Common myeloid progenitor, CD34-positive (primary cell): ENCODE measurements at regions of chr13 and their contacts with region 1.

Region 1: DNA sequence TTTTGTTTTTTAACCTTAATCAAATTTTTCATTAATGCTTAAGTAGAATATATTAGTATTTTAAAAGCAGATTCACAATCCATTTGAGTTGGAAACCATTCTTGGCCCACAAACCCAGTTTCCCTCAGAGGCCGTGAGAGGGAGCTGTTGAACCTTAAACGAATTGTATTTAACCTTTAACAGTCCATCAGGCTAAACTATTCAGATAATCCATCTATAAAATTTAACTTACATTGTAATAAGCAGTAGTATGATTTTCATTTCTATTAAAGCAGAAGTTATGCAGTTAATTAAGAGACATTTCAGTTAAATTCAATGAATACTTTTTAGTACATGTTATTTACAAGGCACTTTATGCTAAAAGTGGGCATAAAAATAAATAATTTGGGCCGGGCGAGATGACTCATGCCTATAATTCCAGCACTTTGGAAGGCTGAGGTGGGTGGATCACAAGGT is 123.1 kb upstream of the C1QTNF9B start:
- DNase-seq: peak; percentile 56 to 78 (median 71)
- H3K4me3 ChIP-seq: no peak overlapping the region
- H3K27ac ChIP-seq: no peak overlapping the region
- H3K4me1 ChIP-seq: peaks cover 0 to 2% (median 0%) of the 10 kb centered on the region in 4 experiments
- H3K27me3 ChIP-seq: no peaks in the 10 kb centered on the region

Region 2: DNA sequence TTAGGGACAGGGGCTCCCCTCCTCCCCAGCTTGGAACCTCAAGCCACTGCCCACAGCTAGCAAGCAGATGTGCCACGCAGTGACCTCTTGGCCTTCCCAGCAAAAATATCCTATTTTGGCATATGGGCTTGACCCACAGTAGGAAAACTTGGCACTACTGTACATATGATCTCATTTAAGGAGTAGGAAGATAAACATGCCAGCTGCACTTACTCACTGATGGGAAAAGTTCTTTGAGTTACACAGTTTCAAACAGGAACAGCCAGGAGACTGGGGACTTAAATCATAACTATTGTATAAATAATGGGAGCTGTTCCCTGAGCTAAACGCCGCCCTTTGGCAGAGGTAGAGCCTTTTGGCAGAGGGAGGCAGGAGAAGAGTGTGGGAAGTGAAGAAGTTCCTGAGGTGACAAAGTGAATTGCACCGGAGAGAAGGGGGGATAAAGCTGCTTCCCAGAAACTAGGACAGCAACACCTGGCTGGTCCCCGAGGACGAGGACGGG is 593.0 kb before region 1 on chr13:
- CTCF ChIA-PET with region 1: no interaction called
- POLR2A ChIA-PET with region 1: no interaction called
- DNase-seq: no peak
- H3K4me3 ChIP-seq: no peak overlapping the region
- H3K27ac ChIP-seq: no peak overlapping the region
- H3K4me1 ChIP-seq: no peaks in the 10 kb centered on the region
- H3K27me3 ChIP-seq: peaks cover 3 to 17% (median 8%) of the 10 kb centered on the region in 5 experiments

Region 3: DNA sequence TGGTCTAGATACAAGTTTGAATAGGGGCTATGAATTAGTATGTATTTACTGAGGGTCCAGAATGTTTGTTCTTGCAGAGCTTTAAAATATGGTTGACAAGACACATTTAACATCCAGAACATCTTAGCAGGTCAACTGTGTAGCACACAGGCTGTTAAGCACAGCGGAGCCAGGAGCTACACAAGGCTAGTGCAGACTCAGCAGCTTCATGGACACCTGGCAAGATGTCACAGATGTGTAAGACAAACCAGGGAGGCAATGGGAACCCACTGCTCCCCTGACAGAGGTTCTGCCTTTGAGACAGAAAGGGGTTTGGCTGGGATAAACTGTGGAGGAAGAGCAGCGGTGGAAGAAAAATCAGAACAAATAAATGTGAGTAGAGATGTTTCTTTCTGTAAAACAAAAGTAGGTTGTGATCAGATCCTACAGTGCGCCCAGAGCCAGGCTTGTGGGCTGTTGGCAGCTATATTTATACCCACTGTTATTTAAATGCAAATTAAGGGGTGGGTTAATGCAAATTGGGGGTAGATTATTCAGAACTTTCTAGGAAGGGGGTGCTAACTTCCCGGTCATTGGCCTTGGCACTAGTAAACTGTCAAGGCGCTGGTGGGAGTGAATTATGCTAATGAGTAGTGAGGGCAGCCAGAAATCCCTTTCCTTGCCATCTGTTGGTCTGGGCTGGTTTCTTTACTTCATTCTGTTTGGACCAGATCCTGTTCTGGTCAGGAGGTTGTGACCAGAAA is 164.2 kb before region 1 on chr13:
- CTCF ChIA-PET with region 1: no interaction called
- POLR2A ChIA-PET with region 1: no interaction called
- DNase-seq: no peak
- H3K4me3 ChIP-seq: no peak overlapping the region
- H3K27ac ChIP-seq: no peak overlapping the region
- H3K4me1 ChIP-seq: no peaks in the 10 kb centered on the region
- H3K27me3 ChIP-seq: no peaks in the 10 kb centered on the region

Region 4: GRCh38 chr13:23992781-23993679 is 27.4 kb before region 1 on chr13:
- CTCF ChIA-PET with region 1: no interaction called
- POLR2A ChIA-PET with region 1: no interaction called
- DNase-seq: no peak
- H3K4me3 ChIP-seq: no peak overlapping the region
- H3K27ac ChIP-seq: no peak overlapping the region
- H3K4me1 ChIP-seq: peaks cover 0 to 4% (median 2%) of the 10 kb centered on the region in 4 experiments
- H3K27me3 ChIP-seq: peaks cover 0 to 7% (median 0%) of the 10 kb centered on the region in 5 experiments

Region 5: GRCh38 chr13:24033527-24034302 is 13.3 kb after region 1 on chr13:
- CTCF ChIA-PET with region 1: interaction called, 16 read pairs
- POLR2A ChIA-PET with region 1: no interaction called
- DNase-seq: no peak
- H3K4me3 ChIP-seq: no peak overlapping the region
- H3K27ac ChIP-seq: no peak overlapping the region
- H3K4me1 ChIP-seq: peaks cover 3 to 7% (median 7%) of the 10 kb centered on the region in 4 experiments
- H3K27me3 ChIP-seq: peaks cover 0 to 2% (median 0%) of the 10 kb centered on the region in 5 experiments

Region 6: DNA sequence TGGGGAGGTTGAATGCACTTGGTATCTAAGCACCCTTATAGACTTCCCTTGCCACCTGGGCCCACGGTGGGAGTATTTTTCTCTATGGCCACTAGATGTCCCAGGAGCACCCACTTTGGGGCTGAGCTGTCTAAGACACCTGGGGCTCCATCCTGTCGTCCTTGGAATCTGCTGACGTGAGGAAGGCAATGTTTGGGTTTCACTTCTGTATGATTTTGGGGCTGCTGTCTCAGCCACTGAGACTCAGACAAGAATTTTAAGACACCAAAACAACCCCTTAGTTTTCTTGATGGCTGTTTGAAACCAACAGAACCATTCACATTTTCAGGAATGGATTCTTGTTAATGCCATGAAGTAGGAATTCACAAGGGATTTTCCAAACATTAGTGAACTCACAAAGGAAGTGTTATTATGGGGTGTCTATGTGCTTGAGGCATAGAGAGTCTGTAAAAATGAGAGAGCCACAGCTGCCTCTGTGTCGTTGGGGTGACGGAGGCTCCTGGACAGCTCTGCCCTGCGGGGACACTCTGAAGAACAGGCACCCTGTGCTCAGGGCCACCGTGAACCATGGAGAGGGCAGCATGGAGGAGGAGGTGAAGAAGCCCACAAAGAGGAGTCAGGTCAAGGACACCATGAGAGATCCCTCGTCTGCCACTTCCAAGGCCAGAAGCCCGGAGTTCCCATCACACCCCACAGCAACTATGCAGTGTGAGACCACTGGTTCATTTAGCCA is 33.3 kb after region 1 on chr13:
- CTCF ChIA-PET with region 1: interaction called, 37 read pairs
- POLR2A ChIA-PET with region 1: no interaction called
- DNase-seq: peak; percentile 64 to 81 (median 78)
- H3K4me3 ChIP-seq: no peak overlapping the region
- H3K27ac ChIP-seq: no peak overlapping the region
- H3K4me1 ChIP-seq: peaks cover 0 to 16% (median 1%) of the 10 kb centered on the region in 4 experiments
- H3K27me3 ChIP-seq: no peaks in the 10 kb centered on the region

Region 7: DNA sequence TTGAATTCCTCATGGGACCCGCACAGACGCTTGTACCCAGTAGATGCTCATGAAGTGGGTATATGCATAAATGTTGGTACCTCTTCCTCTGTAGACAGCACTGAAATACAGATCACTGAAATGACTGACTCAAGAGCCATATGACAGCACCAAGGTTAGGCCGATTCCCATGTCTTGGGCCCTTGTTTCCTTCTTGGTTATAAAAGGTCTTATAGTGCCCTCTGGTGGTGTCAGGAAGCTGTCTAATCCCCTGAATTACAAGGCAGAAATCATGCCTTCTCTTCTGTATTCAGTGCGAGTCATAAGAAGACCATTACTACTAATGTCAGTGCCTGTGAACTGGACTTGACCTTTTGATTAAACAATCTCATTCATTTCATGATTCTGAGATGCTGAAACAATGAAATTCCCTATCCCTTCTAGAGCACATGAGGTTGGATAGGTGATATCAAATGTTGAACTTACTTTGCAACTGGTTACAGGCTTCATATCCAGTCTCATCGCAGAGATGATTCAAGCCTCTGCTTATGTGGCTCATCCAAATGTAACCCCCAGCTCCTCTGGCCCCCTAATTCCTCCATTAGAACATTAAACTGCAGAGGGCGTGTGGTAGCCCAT is 199.8 kb after region 1 on chr13:
- CTCF ChIA-PET with region 1: interaction called, 132 read pairs
- POLR2A ChIA-PET with region 1: interaction called, 3 read pairs
- DNase-seq: peak; percentile 80 to 90 (median 86)
- H3K4me3 ChIP-seq: no peak overlapping the region
- H3K27ac ChIP-seq: no peak overlapping the region
- H3K4me1 ChIP-seq: peaks cover 0 to 22% (median 6%) of the 10 kb centered on the region in 4 experiments
- H3K27me3 ChIP-seq: no peaks in the 10 kb centered on the region

Region 8: GRCh38 chr13:24228852-24229458 is 208.6 kb after region 1 on chr13:
- CTCF ChIA-PET with region 1: interaction called, 79 read pairs
- POLR2A ChIA-PET with region 1: interaction called, 3 read pairs
- DNase-seq: peak; percentile 76 to 83 (median 80)
- H3K4me3 ChIP-seq: no peak overlapping the region
- H3K27ac ChIP-seq: no peak overlapping the region
- H3K4me1 ChIP-seq: peaks cover 0 to 16% (median 1%) of the 10 kb centered on the region in 4 experiments
- H3K27me3 ChIP-seq: no peaks in the 10 kb centered on the region